ENCODE measurements at regions of chr15 and their contacts with region 1.

Region 1: GRCh38 chr15:41465822-41466421 is 27.8 kb upstream of the ITPKA start:
- DNase-seq: no peak
- H3K4me3 Mint-ChIP-seq: no peak overlapping the region
- H3K27ac Mint-ChIP-seq: no peak overlapping the region
- H3K4me1 Mint-ChIP-seq: no peaks in the 10 kb centered on the region
- H3K27me3 Mint-ChIP-seq: no peaks in the 10 kb centered on the region

Region 2: DNA sequence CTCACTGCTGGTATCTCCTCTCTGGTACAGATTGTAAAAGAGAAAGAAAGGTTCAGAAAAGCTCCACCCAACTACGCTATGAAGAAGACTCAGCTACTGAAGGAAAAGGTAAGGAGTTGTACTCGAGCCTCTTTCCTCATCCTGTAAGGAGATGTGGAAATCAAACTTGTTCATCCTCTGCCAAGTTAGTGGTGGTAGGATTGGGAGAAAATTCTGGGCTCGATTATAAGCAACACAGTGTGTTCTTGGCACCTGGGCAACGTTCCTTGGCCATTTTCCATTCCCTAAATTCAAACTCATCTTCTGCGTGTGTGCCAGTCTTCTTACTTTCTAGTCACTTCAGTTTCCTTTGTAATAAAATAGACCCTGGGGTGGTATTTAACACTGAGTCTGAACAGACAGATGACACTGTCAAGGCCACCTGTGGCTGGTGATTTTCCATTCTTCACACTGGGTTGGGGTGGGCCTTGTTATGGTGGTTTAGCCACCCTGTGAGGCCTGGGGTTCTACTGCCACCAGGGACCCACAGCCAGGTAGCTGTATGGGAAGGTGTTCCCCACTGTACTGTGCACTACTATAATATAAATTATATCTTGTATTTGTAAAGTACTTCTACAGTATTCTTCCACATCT is 10.6 kb after region 1 on chr15:
- CTCF ChIA-PET with region 1: interaction called, 32 read pairs
- POLR2A ChIA-PET with region 1: no interaction called
- intact Hi-C with region 1: no loop called
- DNase-seq: no peak
- H3K4me3 Mint-ChIP-seq: no peak overlapping the region
- H3K27ac Mint-ChIP-seq: no peak overlapping the region
- H3K4me1 Mint-ChIP-seq: peaks cover 6% of the 10 kb centered on the region
- H3K27me3 Mint-ChIP-seq: no peaks in the 10 kb centered on the region

Region 3: GRCh38 chr15:41501931-41502794 is 36.2 kb after region 1 on chr15:
- CTCF ChIA-PET with region 1: interaction called, 28 read pairs
- POLR2A ChIA-PET with region 1: no interaction called
- intact Hi-C with region 1: loop called (anchors 1 kb)
- DNase-seq: peak; percentile 63
- H3K4me3 Mint-ChIP-seq: peak overlapping the region; percentile 35
- H3K27ac Mint-ChIP-seq: no peak overlapping the region
- H3K4me1 Mint-ChIP-seq: peaks cover 19% of the 10 kb centered on the region
- H3K27me3 Mint-ChIP-seq: peaks cover 39% of the 10 kb centered on the region

Region 4: DNA sequence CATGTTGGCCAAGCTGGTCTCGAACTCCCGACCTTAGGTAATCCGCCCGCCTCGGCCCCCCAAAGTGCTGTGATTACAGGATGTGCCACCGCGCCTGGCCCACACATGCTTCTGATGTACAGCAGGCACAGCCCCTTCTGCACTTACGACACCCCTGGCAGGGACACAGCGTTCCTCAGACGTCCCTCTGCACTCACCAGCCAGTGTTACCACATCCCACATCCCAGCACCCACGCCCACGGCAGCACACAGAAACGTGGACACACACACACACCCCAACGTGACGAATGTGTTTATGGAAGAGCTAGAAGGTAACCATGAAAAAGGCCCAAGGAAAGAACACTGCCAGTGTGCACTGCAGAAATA is 78.7 kb after region 1 on chr15:
- CTCF ChIA-PET with region 1: interaction called, 13 read pairs
- POLR2A ChIA-PET with region 1: no interaction called
- intact Hi-C with region 1: no loop called
- DNase-seq: no peak
- H3K4me3 Mint-ChIP-seq: peak overlapping the region; percentile 95
- H3K27ac Mint-ChIP-seq: no peak overlapping the region
- H3K4me1 Mint-ChIP-seq: peaks cover 8% of the 10 kb centered on the region
- H3K27me3 Mint-ChIP-seq: no peaks in the 10 kb centered on the region

Region 5: GRCh38 chr15:41603941-41604911 is 138.3 kb after region 1 on chr15:
- CTCF ChIA-PET with region 1: interaction called, 19 read pairs
- POLR2A ChIA-PET with region 1: no interaction called
- intact Hi-C with region 1: no loop called
- DNase-seq: peak; percentile 64
- H3K4me3 Mint-ChIP-seq: peak overlapping the region; percentile 60
- H3K27ac Mint-ChIP-seq: no peak overlapping the region
- H3K4me1 Mint-ChIP-seq: peaks cover 11% of the 10 kb centered on the region
- H3K27me3 Mint-ChIP-seq: peaks cover 10% of the 10 kb centered on the region

Measured in activated CD4-positive, alpha-beta memory T cell treated with anti-CD3 and anti-CD28 coated beads for 36 hours (primary cell).